ENCODE measurements at regions of chr12 and their contacts with region 1.

Region 1: GRCh38 chr12:14959463-14959862 is 1.9 kb downstream of the ARHGDIB start:
- DNase-seq: no peak
- H3K4me3 Mint-ChIP-seq: no peak overlapping the region
- H3K27ac Mint-ChIP-seq: no peak overlapping the region
- H3K4me1 Mint-ChIP-seq: peaks cover 17% of the 10 kb centered on the region
- H3K27me3 Mint-ChIP-seq: no peaks in the 10 kb centered on the region
- CTCF ChIP-seq: no peak

Region 2: DNA sequence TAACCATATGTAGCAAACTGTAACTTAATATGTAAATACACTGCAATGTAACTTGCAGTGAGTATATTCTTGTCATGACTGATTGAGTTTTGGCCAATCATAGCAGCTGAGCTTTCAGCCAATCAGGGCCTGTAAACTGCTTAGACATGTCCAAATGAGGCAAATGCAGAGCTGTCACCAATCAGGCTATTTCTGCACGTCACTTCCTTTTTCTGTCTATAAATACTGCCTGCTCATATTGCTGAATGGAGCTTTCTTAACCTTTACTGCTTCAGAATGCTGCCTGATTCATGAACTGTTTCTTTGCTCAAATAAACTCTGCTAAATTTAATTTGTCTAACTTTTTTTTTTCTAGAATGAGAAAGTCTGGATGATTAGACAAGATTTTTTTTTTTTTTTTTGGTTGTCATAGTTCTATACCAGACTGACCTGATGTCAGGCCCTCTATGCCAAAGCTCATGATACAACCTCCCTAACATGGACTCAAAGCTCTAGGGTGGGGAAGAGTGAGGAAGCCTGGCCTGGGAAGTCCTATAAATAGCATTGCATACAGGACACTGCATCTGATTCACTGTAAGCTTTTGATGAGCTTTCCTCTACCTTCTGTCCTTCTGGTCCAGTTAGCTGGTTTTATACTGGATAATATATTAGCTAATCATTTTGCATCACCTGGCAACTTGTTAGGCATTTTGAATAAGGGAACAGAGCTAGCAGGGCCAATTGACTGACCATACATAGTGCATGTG is 85.8 kb before region 1 on chr12:
- CTCF ChIA-PET with region 1: interaction called, 10 read pairs
- POLR2A ChIA-PET with region 1: interaction called, 3 read pairs
- intact Hi-C with region 1: no loop called
- DNase-seq: no peak
- H3K4me3 Mint-ChIP-seq: no peak overlapping the region
- H3K27ac Mint-ChIP-seq: no peak overlapping the region
- H3K4me1 Mint-ChIP-seq: peaks cover 16% of the 10 kb centered on the region
- H3K27me3 Mint-ChIP-seq: no peaks in the 10 kb centered on the region
- CTCF ChIP-seq: no peak

Measured in MCF 10A (cell line).